Activated naive CD4-positive, alpha-beta T cell treated with anti-CD3 and anti-CD28 coated beads for 36 hours (primary cell): ENCODE measurements at regions of chr6 and their contacts with region 1.

Region 1: GRCh38 chr6:155223646-155224451 is 40.0 kb upstream of the CLDN20 start:
- DNase-seq: peak; percentile 82
- H3K4me3 Mint-ChIP-seq: no peak overlapping the region
- H3K27ac Mint-ChIP-seq: peak overlapping the region; percentile 74
- H3K4me1 Mint-ChIP-seq: peaks cover 25% of the 10 kb centered on the region
- H3K27me3 Mint-ChIP-seq: peaks cover 18% of the 10 kb centered on the region

Region 2: DNA sequence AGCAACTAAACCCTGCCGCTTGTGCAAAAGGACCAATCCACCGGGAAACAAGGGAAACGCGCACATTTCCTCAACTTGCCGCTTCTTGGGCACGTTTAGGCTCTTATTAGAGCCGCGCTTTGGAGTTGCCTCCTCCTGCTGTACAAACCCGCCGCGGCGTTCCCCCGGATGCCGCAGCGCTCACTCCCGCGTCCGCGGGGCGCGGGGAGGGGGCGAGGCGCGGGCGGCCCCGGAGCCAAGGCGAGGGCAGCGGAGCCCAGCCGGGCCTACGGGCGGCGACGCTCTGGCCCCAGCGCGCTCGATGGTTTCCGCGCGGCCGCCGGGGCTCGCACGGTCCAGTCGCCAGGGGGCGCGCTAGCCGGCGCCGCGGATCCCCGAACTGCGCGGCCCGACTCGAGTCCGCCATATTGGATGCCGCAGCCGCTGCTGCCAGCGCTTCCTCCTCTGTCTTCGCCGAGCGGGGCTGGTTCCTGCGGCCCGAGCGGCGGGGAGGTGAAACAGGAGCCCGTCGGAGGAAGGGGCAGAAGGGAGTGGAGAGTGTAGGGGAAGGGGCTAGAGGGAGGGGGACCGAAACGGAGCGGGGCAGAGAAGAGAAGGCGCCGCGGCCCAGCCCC is 490.7 kb before region 1 on chr6 and contains the start of gene SCAF8:
- CTCF ChIA-PET with region 1: no interaction called
- intact Hi-C with region 1: loop called (anchors 1 kb)
- DNase-seq: peak; percentile 83
- H3K4me3 Mint-ChIP-seq: peak within 1 kb of the TSS; percentile 85
- H3K27ac Mint-ChIP-seq: peak within 1 kb of the TSS; percentile 93
- H3K4me1 Mint-ChIP-seq: peaks cover 44% of the 10 kb centered on the region
- H3K27me3 Mint-ChIP-seq: no peaks in the 10 kb centered on the region
- total RNA-seq, gene SCAF8: 27.2 to 28.0 TPM

Region 3: GRCh38 chr6:155050311-155050710 is 173.5 kb before region 1 on chr6:
- CTCF ChIA-PET with region 1: no interaction called
- intact Hi-C with region 1: loop called (anchors 1 kb)
- DNase-seq: peak; percentile 63
- H3K4me3 Mint-ChIP-seq: no peak overlapping the region
- H3K27ac Mint-ChIP-seq: peak overlapping the region; percentile 79
- H3K4me1 Mint-ChIP-seq: peaks cover 25% of the 10 kb centered on the region
- H3K27me3 Mint-ChIP-seq: peaks cover 8% of the 10 kb centered on the region

Region 4: DNA sequence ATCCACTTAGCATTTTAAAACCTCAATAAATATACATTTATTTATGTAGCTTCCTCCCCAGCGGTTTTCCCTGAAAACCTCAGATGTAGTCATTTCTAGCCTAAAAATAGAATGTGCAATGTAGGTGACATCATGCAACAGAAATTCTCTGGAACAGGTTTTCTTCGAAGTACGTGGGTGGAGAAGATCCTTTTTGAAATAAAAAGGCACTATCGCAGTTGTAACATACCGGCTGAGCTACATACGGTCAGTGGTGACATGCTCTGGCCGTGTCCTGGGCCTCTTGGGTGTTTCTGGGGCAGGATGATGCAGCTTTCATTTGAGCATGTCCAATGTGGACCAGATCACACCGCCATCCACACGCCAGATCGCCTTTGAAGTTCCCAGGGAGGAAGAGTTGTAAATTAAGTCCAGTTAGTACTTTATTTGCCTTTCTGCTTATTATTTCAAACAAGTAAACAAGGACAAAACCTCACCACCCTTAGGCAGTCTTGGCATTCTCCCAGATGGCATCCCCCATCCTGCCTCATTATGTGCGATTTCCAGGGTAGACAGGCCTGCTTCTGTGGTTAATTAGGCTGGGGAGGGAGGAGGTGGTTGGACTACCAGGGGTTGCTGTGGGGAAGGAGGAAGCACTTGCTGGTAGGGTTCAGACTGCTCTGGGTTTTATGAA is 69.6 kb before region 1 on chr6:
- CTCF ChIA-PET with region 1: no interaction called
- intact Hi-C with region 1: loop called (anchors 1 kb)
- DNase-seq: peak; percentile 42
- H3K4me3 Mint-ChIP-seq: no peak overlapping the region
- H3K27ac Mint-ChIP-seq: peak overlapping the region; percentile 89
- H3K4me1 Mint-ChIP-seq: peaks cover 70% of the 10 kb centered on the region
- H3K27me3 Mint-ChIP-seq: no peaks in the 10 kb centered on the region

Region 5: GRCh38 chr6:155324993-155325392 is 101.1 kb after region 1 on chr6:
- CTCF ChIA-PET with region 1: no interaction called
- intact Hi-C with region 1: no loop called
- DNase-seq: no peak
- H3K4me3 Mint-ChIP-seq: no peak overlapping the region
- H3K27ac Mint-ChIP-seq: no peak overlapping the region
- H3K4me1 Mint-ChIP-seq: peaks cover 17% of the 10 kb centered on the region
- H3K27me3 Mint-ChIP-seq: no peaks in the 10 kb centered on the region

Region 6: DNA sequence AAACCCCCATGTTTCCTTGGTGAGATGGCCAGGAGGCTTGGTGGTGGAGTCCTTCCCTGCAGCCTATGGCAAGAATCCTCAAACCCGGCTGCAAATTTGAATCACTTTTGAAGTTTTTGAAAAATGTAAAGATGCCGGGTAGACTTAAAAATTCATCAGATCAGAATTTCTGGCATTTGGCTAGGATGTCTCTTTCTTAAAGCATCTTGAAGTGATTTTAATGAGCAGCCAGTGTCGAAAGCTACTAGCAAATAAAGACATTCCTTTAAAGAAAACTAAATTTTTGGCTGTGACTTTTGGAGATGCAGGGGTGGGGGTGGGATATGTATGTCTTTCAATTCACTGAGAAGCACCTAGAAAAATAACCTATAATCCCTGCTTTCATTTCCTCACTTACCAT is 257.4 kb after region 1 on chr6:
- CTCF ChIA-PET with region 1: no interaction called
- intact Hi-C with region 1: no loop called
- DNase-seq: no peak
- H3K4me3 Mint-ChIP-seq: no peak overlapping the region
- H3K27ac Mint-ChIP-seq: no peak overlapping the region
- H3K4me1 Mint-ChIP-seq: peaks cover 8% of the 10 kb centered on the region
- H3K27me3 Mint-ChIP-seq: no peaks in the 10 kb centered on the region

Region 7: DNA sequence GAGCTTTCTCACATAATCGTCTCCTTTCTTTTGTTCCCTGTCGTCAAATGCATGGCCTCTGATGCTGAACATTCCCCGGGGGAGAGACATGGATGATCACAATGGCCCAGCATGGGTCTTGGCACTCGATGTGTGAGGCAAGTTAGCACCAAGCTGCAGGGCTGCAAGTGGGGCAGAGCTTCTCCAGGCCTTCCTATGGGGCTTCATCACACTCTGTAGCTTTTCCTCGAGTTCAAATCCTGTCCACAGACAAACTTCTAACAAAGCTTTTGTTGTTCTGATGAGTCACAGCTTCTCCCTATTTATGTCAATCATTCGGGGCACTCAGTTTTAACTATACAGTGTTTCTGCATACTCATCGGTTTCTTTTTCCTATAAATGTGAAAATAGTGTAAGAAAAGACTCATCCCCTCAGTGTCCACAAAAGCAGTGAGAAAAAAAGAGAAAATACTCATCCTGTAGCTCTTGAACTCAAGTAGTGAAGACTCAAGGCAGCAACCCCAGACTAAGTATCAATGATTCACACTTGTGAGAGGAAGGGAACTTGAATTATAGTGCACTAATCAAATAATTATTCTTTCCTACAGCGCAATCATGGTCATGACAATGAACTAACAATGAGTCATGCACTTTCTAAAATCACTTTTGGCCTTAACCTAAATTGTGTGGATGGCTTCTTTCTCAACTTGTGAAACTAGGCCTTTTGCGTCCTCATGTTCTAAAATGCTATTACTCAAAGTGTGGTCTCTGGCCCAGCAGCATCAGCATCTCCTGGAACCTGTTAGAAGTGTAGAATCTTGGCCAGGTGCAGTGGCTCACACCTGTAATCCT is 300.2 kb after region 1 on chr6:
- CTCF ChIA-PET with region 1: no interaction called
- intact Hi-C with region 1: loop called (anchors 1 kb)
- DNase-seq: peak; percentile 43
- H3K4me3 Mint-ChIP-seq: no peak overlapping the region
- H3K27ac Mint-ChIP-seq: peak overlapping the region; percentile 84
- H3K4me1 Mint-ChIP-seq: peaks cover 47% of the 10 kb centered on the region
- H3K27me3 Mint-ChIP-seq: no peaks in the 10 kb centered on the region